B cell (primary cell): ENCODE measurements at regions of chr17 and their contacts with region 1.

Region 1: GRCh38 chr17:7687908-7688807 is at the start of gene WRAP53:
- DNase-seq: peak; percentile 96
- ATAC-seq: peak; percentile 76
- H3K4me3 ChIP-seq: peak within 1 kb of the TSS; percentile 68 to 100 (median 100)
- H3K4me3 Mint-ChIP-seq: peak within 1 kb of the TSS; percentile 98
- H3K27ac ChIP-seq: peak within 1 kb of the TSS; percentile 94 to 99
- H3K27ac Mint-ChIP-seq: peak within 1 kb of the TSS; percentile 100
- H3K4me1 ChIP-seq: peaks cover 22 to 32% of the 10 kb centered on the region in 2 donors
- H3K4me1 Mint-ChIP-seq: peaks cover 34% of the 10 kb centered on the region
- H3K27me3 ChIP-seq: no peaks in the 10 kb centered on the region
- H3K27me3 Mint-ChIP-seq: no peaks in the 10 kb centered on the region
- CTCF ChIP-seq: peak; percentile 100
- total RNA-seq, gene WRAP53: 17.2 and 18.2 TPM in 2 replicates

Region 2: DNA sequence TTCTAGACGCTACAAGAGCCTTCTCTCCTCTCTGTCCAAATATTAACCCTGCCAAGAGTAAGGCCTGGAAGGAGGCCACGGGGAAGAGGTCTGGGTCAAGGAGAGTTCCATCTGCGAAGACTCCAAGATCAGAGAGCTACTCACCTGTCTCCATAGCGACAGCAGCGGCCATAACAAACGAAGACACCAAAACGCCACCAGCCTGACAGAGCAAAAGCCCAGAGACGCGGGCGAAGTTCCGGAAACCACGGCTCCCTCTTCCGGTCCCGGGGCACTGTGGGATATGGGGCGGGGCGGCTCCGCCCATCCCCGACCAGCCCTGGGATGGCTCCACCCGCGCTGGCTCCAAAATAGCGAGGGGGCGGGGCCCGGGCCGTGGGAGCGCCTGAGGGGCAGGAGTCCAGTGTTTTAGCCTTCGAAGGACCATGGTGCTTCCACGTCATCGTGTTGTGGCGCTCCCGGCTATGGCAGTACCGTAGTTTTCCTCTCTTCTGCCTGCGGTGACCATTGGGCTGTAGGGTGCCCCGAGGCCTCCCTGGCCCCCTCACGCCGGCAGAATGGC is 1036.7 kb before region 1 on chr17 and contains the starts of genes C17orf100 and MED31:
- CTCF ChIA-PET with region 1: no interaction called
- POLR2A ChIA-PET with region 1: no interaction called
- intact Hi-C with region 1: loop called (anchors 5 kb)
- DNase-seq: peak; percentile 95
- ATAC-seq: peak; percentile 91
- H3K4me3 ChIP-seq: peak within 1 kb of the TSS; percentile 63 to 96 (median 74)
- H3K4me3 Mint-ChIP-seq: peak within 1 kb of the TSS; percentile 99
- H3K27ac ChIP-seq: peak within 1 kb of the TSS; percentile 96 to 99
- H3K27ac Mint-ChIP-seq: peak within 1 kb of the TSS; percentile 99
- H3K4me1 ChIP-seq: peaks cover 28 to 45% of the 10 kb centered on the region in 2 donors
- H3K4me1 Mint-ChIP-seq: peaks cover 69% of the 10 kb centered on the region
- H3K27me3 ChIP-seq: no peaks in the 10 kb centered on the region
- H3K27me3 Mint-ChIP-seq: no peaks in the 10 kb centered on the region
- CTCF ChIP-seq: no peak
- total RNA-seq, gene C17orf100: 7.7 and 11.6 TPM in 2 replicates
- total RNA-seq, gene MED31: 24.7 and 25.5 TPM in 2 replicates

Region 3: GRCh38 chr17:7252176-7253043 is 435.7 kb before region 1 on chr17 and contains the start of gene ELP5:
- CTCF ChIA-PET with region 1: no interaction called
- POLR2A ChIA-PET with region 1: no interaction called
- intact Hi-C with region 1: loop called (anchors 5 kb)
- DNase-seq: peak; percentile 100
- ATAC-seq: peak; percentile 64
- H3K4me3 ChIP-seq: peak within 1 kb of the TSS; percentile 69 to 90 (median 78)
- H3K4me3 Mint-ChIP-seq: peak within 1 kb of the TSS; percentile 98
- H3K27ac ChIP-seq: peak within 1 kb of the TSS; percentile 98 to 100
- H3K27ac Mint-ChIP-seq: peak within 1 kb of the TSS; percentile 100
- H3K4me1 ChIP-seq: peaks cover 30 to 33% of the 10 kb centered on the region in 2 donors
- H3K4me1 Mint-ChIP-seq: peaks cover 44% of the 10 kb centered on the region
- H3K27me3 ChIP-seq: no peaks in the 10 kb centered on the region
- H3K27me3 Mint-ChIP-seq: no peaks in the 10 kb centered on the region
- CTCF ChIP-seq: no peak
- total RNA-seq, gene ELP5: 42.2 and 48.0 TPM in 2 replicates

Region 4: DNA sequence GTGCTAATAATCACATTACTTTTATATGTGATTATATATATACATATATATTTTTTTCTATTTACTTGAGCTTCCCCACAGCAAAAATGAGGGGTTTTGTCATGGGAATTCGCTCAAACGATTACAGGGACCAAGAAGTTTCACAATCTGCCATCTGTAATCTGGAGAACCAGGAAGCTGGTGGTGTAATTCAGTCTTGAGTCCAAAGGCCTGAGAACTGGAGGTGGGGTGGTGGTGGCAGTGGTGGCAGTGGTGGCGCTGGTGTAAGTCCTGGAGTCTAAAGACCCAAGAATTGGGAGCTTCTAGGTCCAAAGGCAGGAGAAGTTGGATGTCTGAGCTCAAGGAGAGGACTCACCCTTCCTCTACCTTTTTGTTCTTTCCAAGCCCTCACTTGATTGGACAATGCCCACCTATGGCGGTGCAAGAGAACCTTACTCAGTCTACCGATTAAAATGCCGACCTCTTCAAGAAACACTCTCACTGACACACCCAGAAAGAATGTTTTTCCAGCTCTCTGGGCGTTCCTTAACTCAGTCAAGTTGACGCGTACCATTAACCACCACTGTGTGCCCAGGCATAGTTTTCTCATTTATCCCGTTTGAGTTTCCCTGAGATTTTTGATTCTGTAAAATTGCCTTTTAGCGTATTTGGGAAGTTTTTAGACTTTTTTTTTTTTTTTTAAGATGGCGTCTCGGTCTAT is 172.1 kb before region 1 on chr17:
- CTCF ChIA-PET with region 1: interaction called, 4 read pairs
- POLR2A ChIA-PET with region 1: interaction called, 5 read pairs
- intact Hi-C with region 1: loop called (anchors 2 kb)
- DNase-seq: no peak
- ATAC-seq: no peak
- H3K4me3 ChIP-seq: no peak overlapping the region
- H3K4me3 Mint-ChIP-seq: no peak overlapping the region
- H3K27ac ChIP-seq: no peak overlapping the region
- H3K27ac Mint-ChIP-seq: no peak overlapping the region
- H3K4me1 ChIP-seq: no peaks in the 10 kb centered on the region
- H3K4me1 Mint-ChIP-seq: no peaks in the 10 kb centered on the region
- H3K27me3 ChIP-seq: no peaks in the 10 kb centered on the region
- H3K27me3 Mint-ChIP-seq: no peaks in the 10 kb centered on the region
- CTCF ChIP-seq: no peak

Region 5: DNA sequence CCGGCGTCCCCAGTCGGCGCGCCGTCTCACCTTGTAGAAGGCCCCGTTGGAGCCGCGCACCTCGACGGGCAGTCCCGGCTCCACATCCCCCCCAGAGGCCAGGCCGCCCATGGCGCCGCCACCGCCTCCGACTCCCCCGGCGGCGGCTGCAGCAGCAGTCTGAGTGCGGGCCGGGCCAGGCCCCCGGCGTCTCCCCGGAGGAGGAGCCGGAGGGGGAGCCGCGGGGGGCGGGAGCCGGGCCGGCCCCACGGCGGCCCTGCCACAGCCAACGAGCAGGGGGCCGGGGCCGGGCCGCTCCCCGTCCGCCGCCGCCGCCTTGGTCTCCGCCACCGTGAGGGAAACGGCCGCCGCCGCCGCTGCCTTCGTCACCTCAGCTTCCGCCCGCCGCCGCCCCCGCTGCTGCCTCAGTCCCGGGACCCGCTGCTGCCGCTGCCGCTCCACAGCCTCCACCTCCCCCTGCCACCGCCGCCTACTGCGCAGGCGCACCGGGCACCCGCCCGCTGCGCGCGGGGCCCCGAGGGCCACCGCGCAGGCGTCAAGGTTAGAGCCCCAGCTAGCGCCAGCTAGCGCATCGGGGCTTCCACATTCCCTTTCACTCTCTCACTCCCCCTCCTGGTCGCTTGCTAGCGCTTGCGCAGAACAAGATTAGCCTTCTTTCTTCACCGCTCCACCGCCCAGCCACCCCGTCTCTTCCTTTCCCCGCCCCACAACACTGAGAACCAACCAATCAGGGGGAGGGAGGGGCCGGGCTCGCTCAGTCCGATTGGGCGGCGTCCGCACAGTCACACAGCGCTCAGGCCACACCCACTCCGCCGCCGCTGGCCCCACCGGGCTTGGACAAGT is 73.5 kb before region 1 on chr17 and contains the start of gene FXR2:
- CTCF ChIA-PET with region 1: interaction called, 14 read pairs
- POLR2A ChIA-PET with region 1: interaction called, 35 read pairs
- intact Hi-C with region 1: loop called (anchors 1 kb)
- DNase-seq: peak; percentile 100
- ATAC-seq: peak; percentile 89
- H3K4me3 ChIP-seq: peak within 1 kb of the TSS; percentile 73 to 82 (median 76)
- H3K4me3 Mint-ChIP-seq: peak within 1 kb of the TSS; percentile 88
- H3K27ac ChIP-seq: peak within 1 kb of the TSS; percentile 67 to 85
- H3K27ac Mint-ChIP-seq: peak within 1 kb of the TSS; percentile 93
- H3K4me1 ChIP-seq: peaks cover 12 to 26% of the 10 kb centered on the region in 2 donors
- H3K4me1 Mint-ChIP-seq: peaks cover 22% of the 10 kb centered on the region
- H3K27me3 ChIP-seq: no peaks in the 10 kb centered on the region
- H3K27me3 Mint-ChIP-seq: no peaks in the 10 kb centered on the region
- CTCF ChIP-seq: peak; percentile 64
- total RNA-seq, gene FXR2: 44.7 and 45.8 TPM in 2 replicates

Region 6: GRCh38 chr17:7706631-7707354 is 18.6 kb after region 1 on chr17:
- CTCF ChIA-PET with region 1: interaction called, 5 read pairs
- POLR2A ChIA-PET with region 1: interaction called, 10 read pairs
- intact Hi-C with region 1: no loop called
- DNase-seq: no peak
- ATAC-seq: no peak
- H3K4me3 ChIP-seq: no peak overlapping the region
- H3K4me3 Mint-ChIP-seq: no peak overlapping the region
- H3K27ac ChIP-seq: no peak overlapping the region
- H3K27ac Mint-ChIP-seq: no peak overlapping the region
- H3K4me1 ChIP-seq: peaks cover 24 to 28% of the 10 kb centered on the region in 2 donors
- H3K4me1 Mint-ChIP-seq: peaks cover 25% of the 10 kb centered on the region
- H3K27me3 ChIP-seq: peaks cover 0 to 71% (median 20%) of the 10 kb centered on the region in 4 experiments
- H3K27me3 Mint-ChIP-seq: peaks cover 68% of the 10 kb centered on the region
- CTCF ChIP-seq: no peak

Region 7: GRCh38 chr17:7931709-7932482 is 243.7 kb after region 1 on chr17 and contains the starts of genes CNTROB and TRAPPC1:
- CTCF ChIA-PET with region 1: interaction called, 3 read pairs
- POLR2A ChIA-PET with region 1: interaction called, 3 read pairs
- intact Hi-C with region 1: loop called (anchors 1 kb)
- DNase-seq: peak; percentile 100
- ATAC-seq: peak; percentile 98
- H3K4me3 ChIP-seq: peak within 1 kb of the TSS; percentile 75 to 98 (median 89)
- H3K4me3 Mint-ChIP-seq: peak within 1 kb of the TSS; percentile 95
- H3K27ac ChIP-seq: peak within 1 kb of the TSS; percentile 77 to 88
- H3K27ac Mint-ChIP-seq: peak within 1 kb of the TSS; percentile 95
- H3K4me1 ChIP-seq: peaks cover 18 to 33% of the 10 kb centered on the region in 2 donors
- H3K4me1 Mint-ChIP-seq: peaks cover 44% of the 10 kb centered on the region
- H3K27me3 ChIP-seq: no peaks in the 10 kb centered on the region
- H3K27me3 Mint-ChIP-seq: no peaks in the 10 kb centered on the region
- CTCF ChIP-seq: no peak
- total RNA-seq, gene CNTROB: 34.8 and 40.4 TPM in 2 replicates
- total RNA-seq, gene TRAPPC1: 86.0 and 118 TPM in 2 replicates